Posterior vena cava (tissue), 2 donors: ENCODE measurements at regions of chr13 and their contacts with region 1.

Region 1: GRCh38 chr13:99436686-99437416 is 64.4 kb upstream of the TM9SF2 start:
- DNase-seq: peak; percentile 97

Region 2: GRCh38 chr13:98370806-98371515 is 1065.9 kb before region 1 on chr13:
- intact Hi-C with region 1: no loop called
- DNase-seq: no peak

Region 3: GRCh38 chr13:98927951-98928927 is 508.6 kb before region 1 on chr13:
- intact Hi-C with region 1: no loop called
- DNase-seq: no peak

Region 4: DNA sequence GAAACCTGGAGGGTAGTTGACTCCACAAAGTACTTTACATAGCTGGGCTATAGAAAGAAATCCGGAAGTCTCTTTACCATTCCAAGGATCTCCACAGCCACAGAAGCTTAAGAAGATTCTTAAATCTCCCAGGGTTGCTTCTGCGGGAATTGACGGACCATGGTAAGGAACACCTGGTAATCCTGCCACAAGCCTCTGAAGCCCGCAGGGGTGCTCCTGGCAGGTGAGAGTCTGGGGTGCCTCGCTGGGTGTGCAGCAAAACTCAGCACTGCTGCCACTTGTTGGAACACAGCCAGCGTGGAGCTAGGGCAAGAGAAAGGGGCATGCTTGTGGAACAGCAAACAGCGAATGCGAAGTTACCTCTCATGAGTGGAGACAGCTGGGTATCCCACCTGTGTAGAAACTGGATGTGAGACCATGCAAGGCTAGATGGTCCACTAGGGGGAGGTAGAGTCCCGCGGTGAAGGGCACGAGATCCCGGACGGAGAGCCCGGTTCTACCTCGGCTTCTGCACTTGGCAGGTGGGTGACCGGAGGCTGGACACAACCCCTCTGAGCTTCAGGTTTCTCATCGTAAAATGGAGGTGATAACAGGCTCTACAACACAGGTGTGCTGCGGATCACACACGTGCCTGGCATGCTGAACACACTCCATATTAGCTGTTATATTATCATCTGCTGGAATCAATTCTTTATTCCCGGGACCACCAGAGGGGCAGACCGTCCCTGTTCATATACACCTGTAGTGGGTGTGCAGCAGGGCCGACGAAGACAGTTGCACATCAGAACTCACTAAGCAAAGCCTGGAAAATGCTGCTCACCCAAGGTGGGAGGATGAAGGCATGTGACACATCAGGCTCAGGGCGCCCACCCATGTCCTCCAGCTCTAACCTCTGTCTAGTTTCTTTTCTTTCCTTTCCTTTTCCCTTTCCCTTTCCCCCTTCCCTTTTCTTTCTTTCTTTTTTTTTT is 260.3 kb before region 1 on chr13:
- intact Hi-C with region 1: loop called (anchors 5 kb)
- DNase-seq: peak; percentile 89

Region 5: DNA sequence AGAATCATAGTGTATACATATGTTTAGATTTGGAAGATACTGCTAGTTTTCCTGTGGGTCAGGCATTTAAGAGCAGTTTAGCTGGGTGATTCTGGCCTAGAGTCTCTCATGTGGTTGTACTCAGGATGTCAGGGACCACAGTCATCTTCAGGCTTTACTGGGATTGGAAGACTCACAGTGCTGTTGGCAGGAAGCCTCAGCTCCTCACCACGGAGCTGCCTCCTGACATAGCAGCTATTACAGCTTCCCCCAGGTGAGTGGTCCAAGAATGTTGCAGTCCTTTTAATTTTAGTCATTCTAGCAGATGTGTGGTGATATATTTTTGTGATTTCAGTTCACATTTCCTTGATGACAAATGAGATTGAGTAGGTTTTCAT is 161.8 kb before region 1 on chr13:
- intact Hi-C with region 1: loop called (anchors 5 kb)
- DNase-seq: no peak

Region 6: DNA sequence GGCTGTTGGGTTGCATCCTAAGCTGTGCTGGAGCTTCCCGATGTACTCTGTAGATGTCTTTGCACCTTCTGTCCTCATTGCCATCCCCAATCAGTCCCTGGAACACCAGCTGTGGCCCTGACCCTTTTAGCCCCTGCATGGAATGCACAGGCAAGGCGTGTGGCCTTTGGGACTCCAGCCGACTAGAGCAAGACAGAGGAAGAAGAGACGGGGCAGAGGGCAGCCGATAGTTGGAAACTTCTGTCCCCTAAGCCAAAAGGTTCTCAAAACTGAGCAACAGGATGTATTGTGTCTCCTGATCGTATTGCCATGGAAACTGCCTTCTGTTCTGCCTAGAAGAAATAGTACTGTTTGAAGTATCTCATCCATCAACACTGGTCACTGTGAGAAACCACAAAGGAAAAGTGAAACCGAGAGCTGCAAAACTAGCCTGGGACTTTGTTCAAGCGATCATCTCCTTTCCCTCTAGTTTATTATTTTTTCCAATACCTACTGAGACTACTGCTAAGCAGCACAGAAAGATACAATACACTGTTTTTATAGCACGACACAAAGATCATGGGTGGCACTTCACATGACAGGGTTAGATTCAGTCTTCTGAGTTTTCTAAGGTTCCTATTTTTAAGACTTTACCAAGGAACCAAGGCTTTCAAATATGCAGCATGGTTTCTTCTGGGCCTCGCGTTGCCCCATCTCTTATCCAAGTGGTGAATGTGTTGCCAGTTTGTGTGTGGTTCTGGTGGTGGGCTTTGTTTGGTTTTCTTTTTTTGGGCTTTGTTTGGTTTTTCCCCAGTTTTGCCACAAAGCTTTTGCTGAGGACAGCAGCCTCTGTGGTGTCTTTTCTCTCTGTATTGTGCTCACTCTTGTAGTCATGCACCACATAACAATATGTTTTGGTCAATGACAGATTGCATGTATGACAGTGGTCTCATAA is 80.4 kb before region 1 on chr13:
- intact Hi-C with region 1: loop called in 1 of 2 experiments (anchors 1 kb)
- DNase-seq: no peak

Region 7: DNA sequence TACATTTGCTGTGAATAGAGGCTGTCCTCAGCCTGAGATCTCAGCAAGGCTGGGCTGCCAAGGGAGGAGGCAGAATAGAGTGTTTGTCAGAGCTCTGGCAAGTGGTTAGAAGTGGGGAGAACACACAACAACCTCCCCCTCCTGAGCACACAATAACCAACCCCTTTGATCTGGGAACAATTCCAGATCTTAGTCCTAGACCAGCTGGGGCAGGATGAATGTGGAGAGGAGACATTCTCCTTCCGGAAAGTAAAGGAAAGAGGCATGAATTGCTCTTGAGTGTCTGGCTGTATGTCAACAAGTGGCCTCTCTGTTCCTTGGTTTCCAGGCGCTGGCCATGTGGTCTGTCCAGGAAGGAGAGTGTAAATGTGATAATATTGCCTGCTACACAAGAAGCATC is 1352.6 kb after region 1 on chr13:
- intact Hi-C with region 1: no loop called
- DNase-seq: no peak